Heart left ventricle (tissue), 16 donors: ENCODE measurements at regions of chr13 and their contacts with region 1.

Region 1: DNA sequence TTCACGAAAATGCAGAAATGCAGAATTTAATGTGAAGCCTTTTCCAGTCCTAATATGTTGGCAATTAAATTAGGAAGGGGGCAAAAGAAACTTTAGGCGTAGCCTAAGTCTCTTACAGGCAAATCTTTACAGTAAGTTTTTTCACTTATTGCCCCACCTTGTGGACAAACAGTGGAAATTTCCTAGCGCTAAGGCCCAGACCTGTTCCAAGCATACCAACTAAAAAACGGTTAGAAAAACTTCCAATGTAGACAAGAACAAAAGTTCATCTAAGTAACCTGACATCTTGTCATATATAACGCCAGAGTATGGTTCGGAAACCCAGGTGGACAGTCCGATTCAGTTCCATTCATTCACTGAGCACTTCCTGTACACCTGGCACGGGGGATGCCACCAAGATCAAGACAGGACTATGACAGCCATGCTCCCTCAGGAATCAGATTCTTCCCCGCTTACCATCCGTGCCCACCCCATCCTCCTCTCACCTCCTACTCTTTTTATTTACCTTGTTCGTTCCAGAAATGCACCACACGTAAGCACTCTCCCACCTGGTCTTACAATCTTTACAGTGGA is 4.9 kb downstream of the ZAR1L start:
- DNase-seq: no peak
- ATAC-seq: peak; percentile 24 to 78 (median 74)
- H3K4me3 ChIP-seq: peak overlapping the region in 8 of 12 donors; percentile 2 to 41 (median 24)
- H3K27ac ChIP-seq: peak overlapping the region in 3 of 12 donors; percentile 5 to 36 (median 15)
- H3K4me1 ChIP-seq: peaks cover 0 to 18% (median 4%) of the 10 kb centered on the region in 12 donors
- H3K27me3 ChIP-seq: no peaks in the 10 kb centered on the region
- CTCF ChIP-seq: peak; percentile 69 to 87 (median 74)
- POLR2A ChIP-seq: no peak

Region 2: DNA sequence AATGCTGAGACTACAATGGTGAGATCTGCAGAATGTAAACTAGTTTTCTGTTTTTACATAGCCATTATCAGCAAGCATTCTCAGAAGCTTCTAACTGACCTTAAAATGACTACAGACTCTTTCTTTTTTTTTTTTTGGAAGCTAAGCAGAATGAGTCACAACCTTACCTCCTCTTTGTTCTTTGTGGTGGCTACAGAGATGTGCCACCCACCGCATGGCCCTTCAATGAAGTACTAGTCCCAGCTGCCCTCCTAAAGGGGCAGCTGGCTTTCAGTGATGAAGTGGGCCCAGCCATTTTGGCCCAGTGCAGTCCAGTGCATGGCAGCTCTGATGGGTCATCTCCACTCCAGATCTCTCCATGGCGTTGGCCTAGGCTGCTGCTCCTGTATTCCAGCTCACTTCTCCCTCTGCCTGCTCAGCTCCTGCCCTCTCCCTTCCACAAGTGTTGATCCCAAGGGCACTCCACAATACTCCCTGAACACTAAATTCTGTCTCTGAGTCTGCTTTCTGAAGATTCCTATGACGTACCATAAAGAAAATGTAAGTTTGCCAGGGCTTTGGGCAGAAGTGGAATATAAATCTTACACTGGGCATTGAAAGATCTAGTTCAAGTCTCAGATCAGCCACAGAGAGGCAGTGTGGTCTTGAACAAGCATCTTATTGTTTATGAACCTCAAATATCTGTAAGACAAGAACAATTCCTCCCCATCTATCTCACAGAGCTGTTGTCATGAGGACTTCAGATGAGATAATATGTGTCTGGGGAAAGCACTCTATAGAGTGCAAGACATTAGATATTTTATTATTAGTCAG is 485.3 kb before region 1 on chr13:
- intact Hi-C with region 1: loop called in 8 of 10 experiments (anchors 2 to 10 kb)
- DNase-seq: no peak
- ATAC-seq: peak; percentile 39 to 81 (median 74)
- H3K4me3 ChIP-seq: no peak overlapping the region
- H3K27ac ChIP-seq: no peak overlapping the region
- H3K4me1 ChIP-seq: peaks cover 0 to 6% (median 0%) of the 10 kb centered on the region in 12 donors
- H3K27me3 ChIP-seq: no peaks in the 10 kb centered on the region
- CTCF ChIP-seq: peak; percentile 10 to 64 (median 46)
- POLR2A ChIP-seq: no peak

Region 3: GRCh38 chr13:31835932-31836331 is 474.3 kb before region 1 on chr13:
- intact Hi-C with region 1: loop called in 1 of 10 experiments (anchors 10 kb)
- DNase-seq: no peak
- ATAC-seq: peak in 1 of 4 donors; percentile 41
- H3K4me3 ChIP-seq: no peak overlapping the region
- H3K27ac ChIP-seq: no peak overlapping the region
- H3K4me1 ChIP-seq: no peaks in the 10 kb centered on the region
- H3K27me3 ChIP-seq: no peaks in the 10 kb centered on the region
- CTCF ChIP-seq: no peak
- POLR2A ChIP-seq: no peak

Region 4: DNA sequence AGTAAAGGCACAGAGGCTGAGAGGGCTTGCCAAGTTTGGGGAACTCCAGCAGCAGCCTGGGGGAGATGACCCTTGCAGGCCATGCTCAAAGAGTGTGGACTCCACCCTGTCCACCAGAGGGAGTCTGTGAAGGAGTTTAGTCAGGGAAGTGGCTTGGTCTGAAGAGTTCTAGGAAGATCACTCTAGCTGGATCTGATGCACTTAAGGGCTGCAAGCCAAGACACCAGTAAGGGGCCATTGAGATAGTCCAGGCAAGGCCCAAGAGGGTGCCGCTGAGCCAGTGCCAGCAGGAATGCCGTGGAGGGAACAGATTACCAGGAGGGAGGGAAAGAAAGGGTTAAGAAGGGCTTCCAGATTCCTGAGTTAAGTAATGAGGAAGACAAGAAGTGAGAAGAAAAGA is 63.8 kb before region 1 on chr13:
- intact Hi-C with region 1: loop called (anchors 1 to 5 kb)
- DNase-seq: peak in 4 of 5 donors; percentile 53 to 73 (median 58)
- ATAC-seq: peak; percentile 51 to 93 (median 90)
- H3K4me3 ChIP-seq: peak overlapping the region in 1 of 12 donors; percentile 16
- H3K27ac ChIP-seq: peak overlapping the region in 6 of 12 donors; percentile 6 to 43 (median 36)
- H3K4me1 ChIP-seq: peaks cover 0 to 20% (median 13%) of the 10 kb centered on the region in 12 donors
- H3K27me3 ChIP-seq: no peaks in the 10 kb centered on the region
- CTCF ChIP-seq: peak; percentile 65 to 82 (median 72)
- POLR2A ChIP-seq: no peak